Natural killer cell (primary cell): ENCODE measurements at regions of chr16 and their contacts with region 1.

Region 1: DNA sequence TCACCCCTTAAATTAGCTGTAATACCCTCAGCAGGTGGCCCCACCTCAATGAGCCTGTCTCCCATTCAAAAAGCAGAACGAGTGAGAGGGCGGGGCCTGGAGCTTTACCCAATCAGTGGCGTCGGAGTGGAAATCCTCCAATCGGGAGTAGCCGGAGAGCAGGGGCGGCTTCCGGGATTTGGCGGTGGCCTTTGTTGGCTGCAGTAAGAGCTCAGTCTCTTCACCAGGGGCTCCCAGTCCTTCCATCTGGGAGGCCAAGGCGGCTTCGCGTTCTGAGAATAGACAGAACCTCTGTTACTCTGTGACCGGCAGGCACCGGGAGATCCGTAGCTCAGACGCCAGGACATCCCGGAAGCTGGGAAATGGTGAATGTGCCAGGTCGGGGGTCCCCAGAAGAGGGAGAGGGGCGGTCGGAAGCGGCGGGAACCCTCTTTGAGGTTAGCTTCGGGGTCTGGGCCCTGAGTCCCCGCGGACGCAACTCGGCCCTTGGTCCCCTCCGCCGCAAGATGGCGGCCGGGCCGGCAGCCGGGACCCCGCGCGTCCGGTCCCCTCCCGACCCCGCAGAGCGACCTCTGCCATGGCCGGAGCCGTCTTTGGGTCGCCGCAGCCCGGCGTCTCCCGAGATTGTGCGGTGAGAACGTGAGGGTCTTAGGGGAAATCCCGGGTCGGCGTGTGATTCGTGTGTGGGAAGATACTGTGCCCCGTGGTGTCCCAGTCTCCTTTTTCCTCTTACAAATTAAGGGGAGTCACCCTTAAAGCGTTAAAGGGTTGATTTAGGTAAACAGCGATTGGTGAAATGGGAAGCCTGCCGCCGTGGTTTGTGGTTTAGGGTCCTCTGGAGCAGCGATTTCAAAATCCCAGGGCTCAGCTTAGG is 160.3 kb upstream of the ZNF267 start:
- DNase-seq: peak; percentile 89 to 94
- ATAC-seq: peak; percentile 92 to 96 (median 92)
- H3K4me3 ChIP-seq: peak overlapping the region; percentile 96
- H3K4me3 Mint-ChIP-seq: peak overlapping the region; percentile 98
- H3K27ac ChIP-seq: peak overlapping the region; percentile 93
- H3K27ac Mint-ChIP-seq: peak overlapping the region; percentile 93 to 99
- H3K4me1 ChIP-seq: peaks cover 37% of the 10 kb centered on the region
- H3K4me1 Mint-ChIP-seq: peaks cover 57 to 62% of the 10 kb centered on the region in 2 donors
- H3K27me3 ChIP-seq: no peaks in the 10 kb centered on the region
- H3K27me3 Mint-ChIP-seq: no peaks in the 10 kb centered on the region
- CTCF ChIP-seq: no peak

Region 2: GRCh38 chr16:31179747-31180459 is 533.4 kb before region 1 on chr16 and contains the start of gene FUS:
- intact Hi-C with region 1: loop called (anchors 10 kb)
- DNase-seq: peak; percentile 96 to 98
- ATAC-seq: peak; percentile 73 to 88 (median 74)
- H3K4me3 ChIP-seq: peak within 1 kb of the TSS; percentile 89
- H3K4me3 Mint-ChIP-seq: peak within 1 kb of the TSS; percentile 99
- H3K27ac ChIP-seq: peak within 1 kb of the TSS; percentile 92
- H3K27ac Mint-ChIP-seq: peak within 1 kb of the TSS; percentile 99
- H3K4me1 ChIP-seq: peaks cover 71% of the 10 kb centered on the region
- H3K4me1 Mint-ChIP-seq: peaks cover 64 to 69% of the 10 kb centered on the region in 2 donors
- H3K27me3 ChIP-seq: no peaks in the 10 kb centered on the region
- H3K27me3 Mint-ChIP-seq: peaks cover 0 to 2% of the 10 kb centered on the region in 2 donors
- CTCF ChIP-seq: no peak
- total RNA-seq, gene FUS: 872 to 934 (median 918) TPM

Region 3: GRCh38 chr16:31458844-31459721 is 254.2 kb before region 1 on chr16 and contains the start of gene ARMC5:
- intact Hi-C with region 1: loop called (anchors 10 kb)
- DNase-seq: peak; percentile 92 to 99
- ATAC-seq: peak; percentile 68 to 84 (median 70)
- H3K4me3 ChIP-seq: peak within 1 kb of the TSS; percentile 85
- H3K4me3 Mint-ChIP-seq: peak within 1 kb of the TSS; percentile 94
- H3K27ac ChIP-seq: peak within 1 kb of the TSS; percentile 97
- H3K27ac Mint-ChIP-seq: peak within 1 kb of the TSS; percentile 94 to 97
- H3K4me1 ChIP-seq: peaks cover 60% of the 10 kb centered on the region
- H3K4me1 Mint-ChIP-seq: peaks cover 26 to 37% of the 10 kb centered on the region in 2 donors
- H3K27me3 ChIP-seq: no peaks in the 10 kb centered on the region
- H3K27me3 Mint-ChIP-seq: no peaks in the 10 kb centered on the region
- CTCF ChIP-seq: peak; percentile 58
- total RNA-seq, gene ARMC5: 10.4 to 22.8 (median 16.6) TPM

Region 4: GRCh38 chr16:31489616-31490584 is 223.4 kb before region 1 on chr16:
- intact Hi-C with region 1: loop called (anchors 10 kb)
- DNase-seq: peak in 1 of 2 donors; percentile 14
- ATAC-seq: no peak
- H3K4me3 ChIP-seq: no peak overlapping the region
- H3K4me3 Mint-ChIP-seq: peak overlapping the region; percentile 58
- H3K27ac ChIP-seq: no peak overlapping the region
- H3K27ac Mint-ChIP-seq: no peak overlapping the region
- H3K4me1 ChIP-seq: peaks cover 19% of the 10 kb centered on the region
- H3K4me1 Mint-ChIP-seq: peaks cover 7% of the 10 kb centered on the region in 2 donors
- H3K27me3 ChIP-seq: no peaks in the 10 kb centered on the region
- H3K27me3 Mint-ChIP-seq: peaks cover 6 to 10% of the 10 kb centered on the region in 2 donors
- CTCF ChIP-seq: no peak

Region 5: DNA sequence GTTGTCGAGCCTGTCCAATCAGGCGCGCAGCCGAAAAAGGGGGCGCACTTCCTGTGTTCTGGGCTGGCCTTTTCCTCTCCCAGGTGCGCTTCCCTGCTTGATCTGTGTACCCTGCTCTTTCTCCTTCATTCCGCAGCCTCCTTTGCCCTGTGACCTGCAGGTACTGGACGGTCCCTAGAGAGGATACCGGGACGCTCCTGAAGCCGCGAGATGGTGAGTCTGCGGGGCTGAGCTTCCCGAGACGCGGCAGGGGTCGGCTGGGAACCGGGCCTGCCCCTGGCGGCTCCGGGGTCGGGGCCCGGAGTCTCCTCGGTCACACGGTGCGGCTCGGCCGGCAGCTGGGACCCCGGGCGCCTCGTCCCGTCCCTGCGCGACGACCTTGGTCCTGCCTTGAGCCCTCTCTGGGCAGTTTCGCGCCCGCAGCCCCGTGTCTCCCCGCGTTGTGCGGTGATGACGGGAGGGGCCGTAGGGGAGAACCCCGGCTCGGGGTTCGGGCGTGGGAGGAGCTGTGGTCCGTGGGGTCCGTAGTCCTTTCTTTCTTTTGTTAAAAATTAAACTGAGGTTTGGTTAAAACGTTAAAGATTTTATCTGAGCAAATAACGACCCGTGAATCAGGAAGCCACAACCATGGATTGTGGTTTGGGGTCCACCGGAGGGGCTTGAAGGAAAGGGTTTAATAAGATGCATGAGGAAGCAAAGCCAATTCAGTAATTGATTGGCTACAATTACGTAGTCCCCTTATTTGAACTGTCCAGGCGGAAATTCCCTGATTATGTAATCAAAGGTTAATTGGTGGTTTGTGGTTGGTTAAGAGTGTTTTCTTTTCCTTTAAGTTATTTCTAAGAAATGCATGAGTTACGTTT is 12.6 kb before region 1 on chr16:
- intact Hi-C with region 1: loop called (anchors 2 kb)
- DNase-seq: peak; percentile 72 to 92
- ATAC-seq: peak; percentile 80 to 85 (median 81)
- H3K4me3 ChIP-seq: peak overlapping the region; percentile 93
- H3K4me3 Mint-ChIP-seq: peak overlapping the region; percentile 92
- H3K27ac ChIP-seq: peak overlapping the region; percentile 81
- H3K27ac Mint-ChIP-seq: peak overlapping the region; percentile 89 to 93
- H3K4me1 ChIP-seq: peaks cover 37% of the 10 kb centered on the region
- H3K4me1 Mint-ChIP-seq: peaks cover 23% of the 10 kb centered on the region in 2 donors
- H3K27me3 ChIP-seq: no peaks in the 10 kb centered on the region
- H3K27me3 Mint-ChIP-seq: no peaks in the 10 kb centered on the region
- CTCF ChIP-seq: no peak

Region 6: GRCh38 chr16:31868691-31869167 is 155.4 kb after region 1 on chr16:
- intact Hi-C with region 1: loop called (anchors 5 kb)
- DNase-seq: peak; percentile 75 to 89
- ATAC-seq: peak; percentile 40 to 49 (median 45)
- H3K4me3 ChIP-seq: no peak overlapping the region
- H3K4me3 Mint-ChIP-seq: peak overlapping the region; percentile 25
- H3K27ac ChIP-seq: peak overlapping the region; percentile 64
- H3K27ac Mint-ChIP-seq: peak overlapping the region; percentile 57 to 74
- H3K4me1 ChIP-seq: peaks cover 23% of the 10 kb centered on the region
- H3K4me1 Mint-ChIP-seq: peaks cover 19 to 23% of the 10 kb centered on the region in 2 donors
- H3K27me3 ChIP-seq: no peaks in the 10 kb centered on the region
- H3K27me3 Mint-ChIP-seq: peaks cover 0 to 2% of the 10 kb centered on the region in 2 donors
- CTCF ChIP-seq: peak; percentile 93